ENCODE measurements at regions of chr1 and their contacts with region 1.

Region 1: DNA sequence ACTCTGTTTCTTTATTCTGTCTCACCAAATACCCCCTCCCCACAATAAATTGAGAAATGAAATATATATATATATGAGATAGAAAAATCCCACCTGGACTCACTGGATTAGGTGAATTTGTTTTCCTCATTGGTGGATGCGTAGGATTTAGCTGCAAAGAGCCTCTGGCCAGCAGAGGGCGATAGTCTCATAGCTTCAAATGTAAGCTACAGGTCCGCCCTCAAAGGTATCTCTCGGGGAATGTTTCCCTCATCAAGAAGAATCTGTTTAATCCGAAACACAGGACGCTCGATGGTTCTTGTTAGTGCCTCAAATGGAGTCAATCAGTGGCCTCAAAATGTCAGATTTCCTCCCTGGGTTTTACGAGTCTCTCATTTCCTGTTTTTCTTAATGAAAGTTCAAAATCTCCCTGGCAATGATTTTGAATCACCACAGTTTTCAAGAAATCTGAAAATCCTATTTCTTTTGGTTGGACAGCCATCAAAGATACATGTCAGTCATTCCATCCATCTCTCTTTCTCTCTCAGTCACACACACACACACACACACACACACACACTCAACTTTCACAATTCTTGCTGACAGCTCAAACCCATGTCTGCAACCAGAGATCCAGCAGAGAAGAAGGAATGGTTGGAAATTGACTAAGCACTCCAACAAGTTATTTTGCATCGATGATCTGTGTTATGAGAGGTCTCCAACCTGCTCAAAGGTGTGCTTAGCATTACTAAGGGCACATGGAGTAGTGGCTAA is 13.9 kb upstream of the CAMK1G start:
- DNase-seq: peak; percentile 68 to 84 (median 81)
- H3K4me3 ChIP-seq: no peak overlapping the region
- H3K27ac ChIP-seq: no peak overlapping the region
- H3K4me1 ChIP-seq: no peaks in the 10 kb centered on the region
- H3K27me3 ChIP-seq: no peaks in the 10 kb centered on the region
- CTCF ChIP-seq: peak; percentile 45 to 78 (median 71)
- EP300 ChIP-seq: no peak
- POLR2A ChIP-seq: no peak

Region 2: GRCh38 chr1:209755926-209756614 is 186.4 kb after region 1 on chr1 and contains the start of gene TRAF3IP3:
- intact Hi-C with region 1: loop called in 1 of 4 experiments (anchors 5 kb)
- DNase-seq: no peak
- H3K4me3 ChIP-seq: no peak within 1 kb of the TSS
- H3K27ac ChIP-seq: no peak within 1 kb of the TSS
- H3K4me1 ChIP-seq: no peaks in the 10 kb centered on the region
- H3K27me3 ChIP-seq: no peaks in the 10 kb centered on the region
- CTCF ChIP-seq: no peak
- EP300 ChIP-seq: no peak
- POLR2A ChIP-seq: no peak
- total RNA-seq, gene TRAF3IP3: 0.34 to 2.4 (median 1.4) TPM